ENCODE measurements at regions of chr11 and their contacts with region 1.

Region 1: GRCh38 chr11:57324886-57325734 is at the start of gene TNKS1BP1:
- DNase-seq: peak; percentile 97 to 99
- H3K4me3 ChIP-seq: peak within 1 kb of the TSS; percentile 90 to 94
- H3K27ac ChIP-seq: peak within 1 kb of the TSS; percentile 94 to 98
- H3K4me1 ChIP-seq: peaks cover 8 to 28% of the 10 kb centered on the region in 2 donors
- H3K27me3 ChIP-seq: no peaks in the 10 kb centered on the region
- CTCF ChIP-seq: no peak
- total RNA-seq, gene TNKS1BP1: 131 TPM

Region 2: DNA sequence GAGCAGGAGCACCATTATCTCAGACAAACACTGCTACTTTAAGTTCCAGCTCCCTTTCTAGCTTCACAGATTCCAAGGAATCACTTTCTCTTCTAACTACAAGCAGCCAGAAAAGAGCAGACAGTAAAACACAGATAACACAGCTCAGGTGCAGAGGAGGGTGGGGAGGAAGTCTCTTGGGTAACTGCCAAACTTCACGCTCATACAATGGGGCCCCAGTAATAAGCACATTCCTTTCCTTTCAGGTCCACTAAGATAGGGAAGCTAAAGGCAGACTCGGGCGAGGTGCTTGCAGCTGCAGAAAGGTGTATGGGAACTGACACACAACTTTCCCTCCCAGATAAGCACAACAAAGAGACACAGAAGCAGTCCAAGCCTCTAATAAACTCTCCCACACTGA is 507.4 kb before region 1 on chr11:
- intact Hi-C with region 1: no loop called
- DNase-seq: no peak
- H3K4me3 ChIP-seq: no peak overlapping the region
- H3K27ac ChIP-seq: no peak overlapping the region
- H3K4me1 ChIP-seq: no peaks in the 10 kb centered on the region
- H3K27me3 ChIP-seq: no peaks in the 10 kb centered on the region
- CTCF ChIP-seq: no peak

Region 3: GRCh38 chr11:57311109-57311936 is 13.8 kb before region 1 on chr11:
- intact Hi-C with region 1: loop called (anchors 1 kb)
- DNase-seq: peak; percentile 87 to 98
- H3K4me3 ChIP-seq: peak overlapping the region; percentile 51 to 72
- H3K27ac ChIP-seq: peak overlapping the region; percentile 75 to 95
- H3K4me1 ChIP-seq: peaks cover 13 to 39% of the 10 kb centered on the region in 2 donors
- H3K27me3 ChIP-seq: no peaks in the 10 kb centered on the region
- CTCF ChIP-seq: no peak

Region 4: DNA sequence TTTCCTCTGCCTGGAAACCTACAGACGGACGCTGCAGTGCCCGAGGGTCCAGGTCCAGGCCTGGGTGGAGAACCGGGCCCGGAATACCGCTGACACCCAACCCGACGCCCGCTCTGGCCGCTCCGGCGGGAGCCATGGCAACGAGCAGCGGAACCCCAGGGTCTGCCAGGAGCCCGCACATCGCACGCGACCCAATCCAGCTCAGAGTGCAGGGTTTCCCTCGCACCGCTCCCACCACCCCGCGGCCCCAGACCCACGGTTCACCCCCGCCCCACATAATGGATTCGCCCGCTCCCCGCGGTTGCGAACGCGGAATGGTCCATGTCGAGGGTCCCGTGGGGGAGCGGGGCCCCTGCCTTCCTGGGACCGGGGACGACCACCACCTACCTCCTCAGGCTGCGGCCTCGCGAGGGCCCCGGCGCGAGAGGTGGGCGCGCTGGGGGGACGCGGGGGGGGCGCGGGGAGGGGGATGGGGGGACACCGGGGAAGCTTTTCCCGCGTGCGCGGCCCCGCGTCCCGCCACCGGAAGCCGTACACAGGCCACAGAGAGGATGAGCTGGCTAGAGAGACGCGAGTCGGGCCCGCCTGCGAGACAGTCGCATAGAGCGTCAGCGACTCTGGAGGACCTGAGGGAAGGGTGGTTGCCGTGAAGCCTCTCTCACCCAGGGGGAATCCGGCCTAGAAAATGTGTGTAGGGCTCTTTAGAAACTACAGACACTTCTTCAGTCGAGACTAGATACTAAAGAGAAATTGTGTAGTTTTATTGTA is 10.4 kb after region 1 on chr11 and contains the start of gene SSRP1:
- intact Hi-C with region 1: loop called (anchors 1 kb)
- DNase-seq: peak in 1 of 2 donors; percentile 93
- H3K4me3 ChIP-seq: peak within 1 kb of the TSS; percentile 88 to 94
- H3K27ac ChIP-seq: peak within 1 kb of the TSS; percentile 95 to 97
- H3K4me1 ChIP-seq: peaks cover 5 to 12% of the 10 kb centered on the region in 2 donors
- H3K27me3 ChIP-seq: no peaks in the 10 kb centered on the region
- CTCF ChIP-seq: no peak
- total RNA-seq, gene SSRP1: 110 TPM

Region 5: GRCh38 chr11:57499413-57499982 is 174.4 kb after region 1 on chr11:
- intact Hi-C with region 1: loop called (anchors 10 kb)
- DNase-seq: peak; percentile 72 to 97
- H3K4me3 ChIP-seq: peak overlapping the region; percentile 39 to 55
- H3K27ac ChIP-seq: peak overlapping the region; percentile 71 to 77
- H3K4me1 ChIP-seq: peaks cover 4 to 12% of the 10 kb centered on the region in 2 donors
- H3K27me3 ChIP-seq: no peaks in the 10 kb centered on the region
- CTCF ChIP-seq: no peak